PC-9 (cell line): ENCODE measurements at regions of chr6 and their contacts with region 1.

Region 1: DNA sequence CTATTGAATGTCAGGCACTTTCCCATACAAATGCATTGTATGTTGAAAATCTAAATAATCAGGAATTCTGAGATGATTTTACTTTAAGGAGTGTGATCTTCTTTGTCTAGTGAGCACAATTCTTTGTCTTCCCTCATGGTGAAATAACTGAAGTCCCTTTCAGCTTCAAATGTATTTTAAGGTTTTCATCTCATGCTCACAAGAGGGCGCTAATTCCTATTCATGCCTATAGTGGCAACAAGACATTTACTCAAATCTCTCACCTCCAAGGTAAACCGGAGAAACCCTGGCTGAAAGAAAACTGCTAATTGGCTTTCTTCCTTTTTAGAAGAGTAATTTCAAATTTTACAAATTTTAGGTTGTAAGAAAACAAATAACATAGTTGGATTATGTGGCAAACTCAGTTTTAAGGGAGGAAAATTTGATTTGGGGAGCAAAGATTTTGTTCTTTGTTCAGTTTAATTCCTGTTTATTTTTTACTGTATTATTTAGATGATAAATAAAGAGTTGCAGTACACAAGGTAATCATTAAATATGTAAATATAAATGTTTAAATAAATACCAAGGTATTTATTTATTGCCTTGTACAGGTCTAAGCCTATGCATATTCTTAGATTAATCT is 69.1 kb downstream of the SLC35F1 start:
- DNase-seq: peak in 1 of 2 experiments; percentile 48
- H3K4me3 ChIP-seq: no peak overlapping the region
- H3K27ac ChIP-seq: no peak overlapping the region
- H3K4me1 ChIP-seq: no peaks in the 10 kb centered on the region
- H3K27me3 ChIP-seq: no peaks in the 10 kb centered on the region
- CTCF ChIP-seq: peak; percentile 85

Region 2: DNA sequence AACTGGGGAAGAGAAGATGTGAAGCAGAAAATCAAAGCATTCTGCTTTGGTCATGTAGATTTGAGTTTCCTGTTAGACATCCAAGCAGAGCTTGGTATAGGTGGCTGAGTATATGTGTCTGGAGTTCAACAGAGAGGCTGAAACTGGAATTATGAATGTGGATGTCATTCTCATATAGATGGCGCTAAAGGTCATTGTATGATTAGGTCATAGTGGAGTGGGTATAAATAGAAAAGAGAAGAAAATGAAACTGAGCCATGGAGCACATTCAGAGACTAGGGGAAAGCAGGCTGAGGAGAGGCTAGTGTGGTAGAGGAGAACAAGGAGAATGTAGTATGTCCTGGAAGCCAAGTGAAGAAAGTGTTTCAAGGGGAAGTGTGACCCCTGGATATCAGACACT is 276.3 kb after region 1 on chr6:
- CTCF ChIA-PET with region 1: no interaction called
- POLR2A ChIA-PET with region 1: no interaction called
- intact Hi-C with region 1: loop called (anchors 10 kb)
- DNase-seq: no peak
- H3K4me3 ChIP-seq: no peak overlapping the region
- H3K27ac ChIP-seq: no peak overlapping the region
- H3K4me1 ChIP-seq: no peaks in the 10 kb centered on the region
- H3K27me3 ChIP-seq: no peaks in the 10 kb centered on the region
- CTCF ChIP-seq: no peak

Region 3: DNA sequence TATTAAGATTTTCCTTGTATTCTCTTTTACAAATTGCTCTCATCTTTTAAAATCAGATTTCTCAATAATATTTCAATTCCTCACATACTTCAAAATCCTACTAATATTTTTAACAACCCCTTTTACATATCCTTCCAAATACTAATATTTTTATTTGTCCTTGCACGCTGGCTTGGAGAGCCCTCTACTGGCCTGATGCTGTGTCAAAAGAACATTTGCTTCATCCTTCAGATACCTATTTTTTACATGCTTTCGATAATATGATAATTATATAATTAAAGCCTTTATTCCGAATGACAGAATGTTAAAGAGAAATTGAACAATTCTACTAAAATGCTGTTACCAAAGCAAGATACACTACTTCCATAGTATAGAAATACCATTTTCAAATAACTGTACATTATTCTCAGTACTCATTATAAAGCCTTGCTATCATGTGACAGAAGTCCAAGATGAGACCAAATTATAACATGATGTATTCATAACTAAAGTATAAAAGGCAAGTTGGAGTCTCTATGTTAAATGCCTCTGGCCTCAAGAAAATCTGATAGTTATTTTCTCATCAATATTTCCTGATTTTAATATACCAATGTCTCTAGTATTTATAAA is 533.0 kb after region 1 on chr6:
- CTCF ChIA-PET with region 1: no interaction called
- POLR2A ChIA-PET with region 1: no interaction called
- intact Hi-C with region 1: loop called (anchors 5 kb)
- DNase-seq: peak in 1 of 2 experiments; percentile 4
- H3K4me3 ChIP-seq: no peak overlapping the region
- H3K27ac ChIP-seq: no peak overlapping the region
- H3K4me1 ChIP-seq: no peaks in the 10 kb centered on the region
- H3K27me3 ChIP-seq: no peaks in the 10 kb centered on the region
- CTCF ChIP-seq: peak; percentile 93

Region 4: DNA sequence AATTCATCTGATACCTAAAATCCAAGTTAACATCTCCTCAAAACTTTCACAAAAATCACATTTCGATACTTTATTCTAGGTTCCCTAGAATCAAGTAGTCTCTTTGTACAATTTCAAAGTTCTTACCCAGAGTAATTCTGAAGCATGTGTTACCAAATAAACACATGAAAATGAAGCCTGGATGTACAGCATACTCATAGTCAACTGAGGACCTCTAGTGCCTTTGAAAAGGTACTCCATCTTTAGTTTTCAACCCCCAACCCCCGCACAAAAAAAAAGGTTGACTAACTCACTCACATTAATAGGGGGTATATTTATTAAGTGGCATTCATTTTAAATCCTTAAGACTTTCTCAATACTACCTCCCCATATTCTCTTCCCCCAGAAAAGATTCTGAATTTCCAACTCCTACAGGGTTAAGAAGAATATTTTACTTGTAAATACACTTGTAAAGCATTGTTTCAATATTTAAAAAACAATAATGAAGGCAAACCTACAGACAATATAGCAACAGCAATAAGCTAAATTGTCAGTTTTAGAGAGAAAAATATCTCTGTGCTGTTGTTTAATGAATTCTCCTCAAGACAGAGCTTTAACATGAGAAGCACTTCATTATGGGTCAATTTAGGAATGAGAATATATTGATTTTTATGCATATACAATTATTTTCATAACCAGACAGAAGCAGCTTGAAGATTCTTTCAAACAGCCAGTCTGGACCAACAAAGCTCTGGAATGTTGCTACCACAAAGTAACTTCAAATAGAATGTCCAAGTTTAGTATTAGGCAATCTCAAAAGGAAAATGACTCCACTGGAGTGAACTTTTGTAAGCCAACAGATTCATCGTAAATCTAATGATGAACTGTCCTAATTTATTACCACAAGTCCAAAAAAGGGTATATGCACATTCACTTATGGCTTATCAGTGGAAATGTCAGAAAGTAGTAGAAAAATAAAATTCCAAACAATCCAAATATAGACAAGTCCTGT is 575.2 kb after region 1 on chr6:
- CTCF ChIA-PET with region 1: no interaction called
- POLR2A ChIA-PET with region 1: no interaction called
- intact Hi-C with region 1: loop called (anchors 2 kb)
- DNase-seq: peak; percentile 10 to 51
- H3K4me3 ChIP-seq: no peak overlapping the region
- H3K27ac ChIP-seq: no peak overlapping the region
- H3K4me1 ChIP-seq: no peaks in the 10 kb centered on the region
- H3K27me3 ChIP-seq: no peaks in the 10 kb centered on the region
- CTCF ChIP-seq: peak; percentile 88